ENCODE measurements at regions of chr16 and their contacts with region 1.

Region 1: DNA sequence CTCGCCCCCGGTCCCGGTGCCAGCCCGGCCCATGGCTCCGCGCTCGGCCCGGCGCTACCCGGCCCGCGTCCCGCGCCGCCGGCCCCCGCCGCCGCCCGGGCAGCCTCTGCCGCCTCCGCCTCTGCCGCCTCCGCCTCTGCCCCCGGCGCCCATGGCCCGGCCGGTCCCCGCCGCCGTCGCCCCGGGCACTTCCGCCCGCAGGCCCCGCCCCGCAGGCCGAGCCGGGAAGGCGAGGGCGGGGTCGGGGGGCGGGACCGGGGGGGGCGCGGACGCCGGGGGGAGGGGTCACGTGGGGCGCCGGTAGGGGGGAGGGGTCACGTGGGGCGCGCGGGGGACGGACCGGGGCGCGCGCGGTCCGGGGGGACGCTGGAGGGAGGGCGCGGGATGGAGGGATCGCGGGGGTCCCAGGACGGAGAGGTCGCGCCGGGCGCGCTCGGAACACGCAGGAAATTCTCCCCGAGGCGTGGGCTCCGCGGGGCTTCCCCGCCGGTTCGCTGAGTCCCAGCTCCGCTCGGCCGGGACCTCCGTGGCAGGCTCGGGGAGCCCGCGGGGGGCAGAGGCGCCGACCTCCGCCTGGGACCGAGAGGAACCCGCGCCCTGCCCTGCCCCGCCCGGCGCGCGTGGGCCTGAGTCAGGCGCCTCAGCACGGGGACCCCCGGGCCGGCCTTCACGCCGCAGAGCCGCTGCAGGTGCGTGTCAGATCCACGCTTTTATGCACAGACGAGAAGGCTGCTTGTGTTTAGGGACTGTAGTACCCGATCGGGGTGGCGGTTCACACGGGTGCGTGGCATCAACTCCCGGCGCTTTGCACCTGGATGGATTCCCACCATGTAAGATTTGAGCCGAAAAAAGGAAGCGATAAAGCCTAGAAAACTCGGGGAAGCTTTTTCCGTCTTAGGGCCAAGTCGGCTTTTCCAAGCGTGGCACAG is at the start of gene PGAP6:
- DNase-seq: peak; percentile 70 to 71
- H3K4me3 ChIP-seq: peak within 1 kb of the TSS; percentile 84 to 98 (median 91)
- H3K27ac ChIP-seq: peak within 1 kb of the TSS; percentile 58 to 86 (median 83)
- H3K4me1 ChIP-seq: peaks cover 28 to 33% of the 10 kb centered on the region in 2 donors
- H3K27me3 ChIP-seq: no peaks in the 10 kb centered on the region
- CTCF ChIP-seq: no peak
- POLR2A ChIP-seq: peak in 1 of 2 donors; percentile 54
- total RNA-seq, gene PGAP6: 31.6 to 83.3 (median 62.2) TPM

Region 2: GRCh38 chr16:483341-484075 is 101.5 kb after region 1 on chr16:
- intact Hi-C with region 1: loop called (anchors 10 kb)
- DNase-seq: peak in 1 of 2 donors; percentile 9
- H3K4me3 ChIP-seq: no peak overlapping the region
- H3K27ac ChIP-seq: no peak overlapping the region
- H3K4me1 ChIP-seq: no peaks in the 10 kb centered on the region
- H3K27me3 ChIP-seq: no peaks in the 10 kb centered on the region
- CTCF ChIP-seq: no peak
- POLR2A ChIP-seq: no peak